Prostate gland (tissue), 2 donors: ENCODE measurements at regions of chr9 and their contacts with region 1.

Region 1: DNA sequence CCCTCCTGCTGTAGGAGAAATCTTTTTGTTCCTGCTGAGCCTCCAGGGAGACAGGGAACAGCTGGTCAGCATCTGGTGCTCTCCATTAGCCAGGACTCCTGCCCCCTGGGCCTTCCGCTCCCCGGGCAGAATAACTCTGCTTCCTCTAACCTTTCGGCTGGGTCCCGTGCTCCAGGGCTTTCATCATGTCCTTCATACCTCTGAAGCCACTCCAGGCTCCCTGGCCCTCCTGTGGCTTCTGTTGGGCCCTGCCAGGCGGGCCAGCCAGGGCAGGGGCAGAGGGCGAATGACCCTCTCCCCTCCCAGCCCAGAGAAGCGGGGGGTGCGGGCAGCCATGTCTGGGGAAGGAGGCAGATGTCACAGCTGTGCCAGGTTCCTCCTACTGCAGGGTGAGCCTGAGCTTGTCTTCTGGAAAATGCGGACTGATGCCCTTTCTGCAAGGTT is 81.7 kb upstream of the LMX1B start:
- DNase-seq: no peak
- H3K4me3 ChIP-seq: no peak overlapping the region
- H3K27ac ChIP-seq: no peak overlapping the region
- H3K4me1 ChIP-seq: no peaks in the 10 kb centered on the region
- H3K27me3 ChIP-seq: peaks cover 3% of the 10 kb centered on the region
- CTCF ChIP-seq: no peak
- POLR2A ChIP-seq: no peak

Region 2: DNA sequence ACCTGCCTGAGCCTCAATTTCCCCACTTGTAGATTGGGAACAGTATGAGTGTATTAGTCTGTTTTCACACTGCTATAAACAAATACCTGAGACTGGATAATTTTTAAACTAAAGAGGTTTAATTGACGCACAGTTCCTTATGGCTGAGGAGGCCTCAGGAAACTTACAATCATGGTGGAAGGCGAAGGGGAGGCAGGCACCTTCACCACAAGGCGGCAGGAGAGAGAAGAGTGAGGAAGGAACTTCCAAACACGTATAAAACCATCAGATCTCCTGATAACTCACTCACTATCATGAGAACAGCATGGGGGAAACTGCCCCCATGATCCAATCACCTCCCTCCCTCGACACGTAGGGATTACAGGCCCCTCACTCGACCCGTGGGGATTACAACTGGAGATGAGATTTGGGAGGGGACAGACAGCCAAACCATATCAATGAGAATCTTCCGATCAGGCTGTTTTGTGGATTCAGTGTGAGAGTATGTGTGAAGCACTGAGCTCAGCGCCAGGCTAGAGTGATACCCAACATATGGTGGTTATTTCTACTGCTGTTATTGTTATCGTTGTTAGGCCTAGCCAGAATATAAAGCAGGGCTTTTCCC is 67.1 kb after region 1 on chr9:
- intact Hi-C with region 1: loop called (anchors 10 kb)
- DNase-seq: no peak
- H3K4me3 ChIP-seq: no peak overlapping the region
- H3K27ac ChIP-seq: no peak overlapping the region
- H3K4me1 ChIP-seq: no peaks in the 10 kb centered on the region
- H3K27me3 ChIP-seq: no peaks in the 10 kb centered on the region
- CTCF ChIP-seq: no peak
- POLR2A ChIP-seq: no peak